MCF 10A (cell line): ENCODE measurements at regions of chr11 and their contacts with region 1.

Region 1: GRCh38 chr11:102940714-102941588 is 14.6 kb downstream of the MMP13 start:
- DNase-seq: peak; percentile 80
- H3K4me3 Mint-ChIP-seq: no peak overlapping the region
- H3K27ac Mint-ChIP-seq: no peak overlapping the region
- H3K4me1 Mint-ChIP-seq: no peaks in the 10 kb centered on the region
- H3K27me3 Mint-ChIP-seq: no peaks in the 10 kb centered on the region
- CTCF ChIP-seq: peak; percentile 75

Region 2: DNA sequence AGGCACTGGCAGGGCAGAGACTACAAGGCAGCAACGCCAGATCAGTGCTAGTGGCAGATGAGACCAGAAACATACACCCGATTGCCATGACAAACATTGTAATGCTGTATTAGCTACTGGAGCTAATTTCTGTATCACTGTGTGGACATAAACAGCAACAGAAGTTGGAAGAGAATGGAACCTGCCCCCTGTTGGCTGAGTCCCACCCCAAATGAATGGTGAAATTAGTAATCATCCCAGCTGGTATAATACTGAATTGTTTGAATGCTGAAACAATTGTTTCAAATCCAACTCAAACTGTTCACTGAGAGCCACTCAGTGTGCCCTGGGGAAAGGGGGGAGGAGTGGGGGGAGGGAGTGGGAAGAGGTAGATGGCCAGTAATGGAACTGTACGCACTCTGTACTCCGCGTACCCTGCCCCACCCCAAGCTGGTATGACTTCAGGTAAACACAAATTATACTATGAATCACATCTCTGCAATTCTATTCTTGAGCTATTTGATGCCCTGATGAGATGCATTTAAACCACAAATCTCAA is 634.8 kb before region 1 on chr11:
- CTCF ChIA-PET with region 1: no interaction called
- POLR2A ChIA-PET with region 1: no interaction called
- intact Hi-C with region 1: no loop called
- DNase-seq: peak; percentile 96
- H3K4me3 Mint-ChIP-seq: peak overlapping the region; percentile 50
- H3K27ac Mint-ChIP-seq: peak overlapping the region; percentile 99
- H3K4me1 Mint-ChIP-seq: peaks cover 54% of the 10 kb centered on the region
- H3K27me3 Mint-ChIP-seq: no peaks in the 10 kb centered on the region
- CTCF ChIP-seq: peak; percentile 17

Region 3: GRCh38 chr11:102630598-102631448 is 310.1 kb before region 1 on chr11:
- CTCF ChIA-PET with region 1: no interaction called
- POLR2A ChIA-PET with region 1: no interaction called
- intact Hi-C with region 1: no loop called
- DNase-seq: no peak
- H3K4me3 Mint-ChIP-seq: no peak overlapping the region
- H3K27ac Mint-ChIP-seq: no peak overlapping the region
- H3K4me1 Mint-ChIP-seq: no peaks in the 10 kb centered on the region
- H3K27me3 Mint-ChIP-seq: no peaks in the 10 kb centered on the region
- CTCF ChIP-seq: no peak

Region 4: DNA sequence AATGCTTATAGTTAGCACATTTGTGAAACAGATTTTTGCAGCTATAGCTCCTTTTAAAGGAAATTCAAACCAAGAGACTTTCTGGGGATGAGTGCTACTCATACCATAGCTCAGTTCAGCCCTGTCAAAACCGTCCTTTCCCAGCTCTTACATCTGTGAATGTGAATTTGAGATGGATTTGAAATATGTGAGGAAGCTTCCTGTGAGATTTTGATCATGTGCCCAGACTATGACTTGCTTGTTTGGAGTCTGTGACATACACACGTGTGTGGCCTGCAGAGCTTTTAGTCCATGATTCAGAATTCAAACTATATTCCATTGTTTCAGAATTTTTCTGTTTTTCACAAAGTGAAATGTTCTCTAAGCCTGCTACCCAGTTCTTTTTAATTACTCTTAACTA is 138.6 kb before region 1 on chr11:
- CTCF ChIA-PET with region 1: interaction called, 19 read pairs
- POLR2A ChIA-PET with region 1: interaction called, 3 read pairs
- intact Hi-C with region 1: no loop called
- DNase-seq: peak; percentile 63
- H3K4me3 Mint-ChIP-seq: no peak overlapping the region
- H3K27ac Mint-ChIP-seq: no peak overlapping the region
- H3K4me1 Mint-ChIP-seq: peaks cover 6% of the 10 kb centered on the region
- H3K27me3 Mint-ChIP-seq: no peaks in the 10 kb centered on the region
- CTCF ChIP-seq: no peak

Region 5: GRCh38 chr11:102900346-102900745 is 40.6 kb before region 1 on chr11:
- CTCF ChIA-PET with region 1: interaction called, 13 read pairs
- POLR2A ChIA-PET with region 1: no interaction called
- intact Hi-C with region 1: no loop called
- DNase-seq: peak; percentile 26
- H3K4me3 Mint-ChIP-seq: no peak overlapping the region
- H3K27ac Mint-ChIP-seq: peak overlapping the region; percentile 57
- H3K4me1 Mint-ChIP-seq: peaks cover 9% of the 10 kb centered on the region
- H3K27me3 Mint-ChIP-seq: no peaks in the 10 kb centered on the region
- CTCF ChIP-seq: no peak

Region 6: GRCh38 chr11:102929972-102930371 is 11.0 kb before region 1 on chr11:
- CTCF ChIA-PET with region 1: interaction called, 12 read pairs
- POLR2A ChIA-PET with region 1: interaction called, 7 read pairs
- intact Hi-C with region 1: no loop called
- DNase-seq: no peak
- H3K4me3 Mint-ChIP-seq: no peak overlapping the region
- H3K27ac Mint-ChIP-seq: no peak overlapping the region
- H3K4me1 Mint-ChIP-seq: no peaks in the 10 kb centered on the region
- H3K27me3 Mint-ChIP-seq: no peaks in the 10 kb centered on the region
- CTCF ChIP-seq: no peak